B cell (primary cell): ENCODE measurements at regions of chr7 and their contacts with region 1.

Region 1: DNA sequence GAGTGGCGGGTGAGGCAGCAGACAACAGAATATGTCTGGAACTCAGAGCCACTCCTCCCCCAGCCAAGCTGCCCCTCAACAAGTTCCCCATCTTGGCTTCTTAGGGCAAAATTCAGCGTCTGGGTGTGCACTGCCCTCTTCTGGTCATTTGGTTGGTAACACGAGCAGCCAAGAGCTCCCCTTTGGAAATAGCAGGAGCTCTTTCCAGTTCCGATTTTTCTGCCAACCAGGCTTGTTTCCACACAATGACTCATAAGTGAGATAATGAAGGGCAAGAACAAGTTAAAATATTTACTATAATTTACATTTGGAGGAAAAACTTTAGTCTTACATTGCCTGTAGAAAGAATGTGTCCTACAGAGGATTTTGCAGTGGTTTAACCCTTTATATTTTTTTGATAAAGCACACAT is 70.5 kb downstream of the ADCYAP1R1 start:
- DNase-seq: peak; percentile 27
- ATAC-seq: no peak
- H3K4me3 ChIP-seq: no peak overlapping the region
- H3K4me3 Mint-ChIP-seq: no peak overlapping the region
- H3K27ac ChIP-seq: no peak overlapping the region
- H3K27ac Mint-ChIP-seq: no peak overlapping the region
- H3K4me1 ChIP-seq: no peaks in the 10 kb centered on the region
- H3K4me1 Mint-ChIP-seq: no peaks in the 10 kb centered on the region
- H3K27me3 ChIP-seq: no peaks in the 10 kb centered on the region
- H3K27me3 Mint-ChIP-seq: peaks cover 16% of the 10 kb centered on the region
- CTCF ChIP-seq: peak; percentile 66

Region 2: GRCh38 chr7:31134246-31135188 is 11.9 kb after region 1 on chr7:
- CTCF ChIA-PET with region 1: interaction called, 65 read pairs
- POLR2A ChIA-PET with region 1: no interaction called
- intact Hi-C with region 1: no loop called
- DNase-seq: peak; percentile 46
- ATAC-seq: peak; percentile 49
- H3K4me3 ChIP-seq: no peak overlapping the region
- H3K4me3 Mint-ChIP-seq: no peak overlapping the region
- H3K27ac ChIP-seq: no peak overlapping the region
- H3K27ac Mint-ChIP-seq: no peak overlapping the region
- H3K4me1 ChIP-seq: peaks cover 0 to 5% of the 10 kb centered on the region in 2 donors
- H3K4me1 Mint-ChIP-seq: peaks cover 3% of the 10 kb centered on the region
- H3K27me3 ChIP-seq: peaks cover 0 to 4% (median 1%) of the 10 kb centered on the region in 4 experiments
- H3K27me3 Mint-ChIP-seq: no peaks in the 10 kb centered on the region
- CTCF ChIP-seq: peak; percentile 78